ENCODE measurements at regions of chr18 and their contacts with region 1.

Region 1: GRCh38 chr18:45690975-45691815 is 32.8 kb upstream of the SLC14A1 start:
- DNase-seq: peak; percentile 77
- ATAC-seq: no peak
- H3K4me3 ChIP-seq: no peak overlapping the region
- H3K4me3 Mint-ChIP-seq: no peak overlapping the region
- H3K27ac ChIP-seq: no peak overlapping the region
- H3K27ac Mint-ChIP-seq: peak overlapping the region; percentile 43
- H3K4me1 ChIP-seq: peaks cover 32 to 44% of the 10 kb centered on the region in 2 donors
- H3K4me1 Mint-ChIP-seq: peaks cover 40% of the 10 kb centered on the region
- H3K27me3 ChIP-seq: no peaks in the 10 kb centered on the region
- H3K27me3 Mint-ChIP-seq: peaks cover 7% of the 10 kb centered on the region
- CTCF ChIP-seq: peak; percentile 86

Region 2: GRCh38 chr18:45664824-45665763 is 26.1 kb before region 1 on chr18:
- CTCF ChIA-PET with region 1: interaction called, 317 read pairs
- POLR2A ChIA-PET with region 1: interaction called, 31 read pairs
- intact Hi-C with region 1: loop called (anchors 1 kb)
- DNase-seq: peak; percentile 78
- ATAC-seq: peak; percentile 82
- H3K4me3 ChIP-seq: no peak overlapping the region
- H3K4me3 Mint-ChIP-seq: no peak overlapping the region
- H3K27ac ChIP-seq: no peak overlapping the region
- H3K27ac Mint-ChIP-seq: peak overlapping the region; percentile 67
- H3K4me1 ChIP-seq: peaks cover 13 to 26% of the 10 kb centered on the region in 2 donors
- H3K4me1 Mint-ChIP-seq: peaks cover 39% of the 10 kb centered on the region
- H3K27me3 ChIP-seq: no peaks in the 10 kb centered on the region
- H3K27me3 Mint-ChIP-seq: no peaks in the 10 kb centered on the region
- CTCF ChIP-seq: peak; percentile 97

Region 3: GRCh38 chr18:45722899-45723298 is 31.7 kb after region 1 on chr18:
- CTCF ChIA-PET with region 1: interaction called, 17 read pairs
- POLR2A ChIA-PET with region 1: no interaction called
- intact Hi-C with region 1: no loop called
- DNase-seq: peak; percentile 46
- ATAC-seq: peak; percentile 69
- H3K4me3 ChIP-seq: no peak overlapping the region
- H3K4me3 Mint-ChIP-seq: no peak overlapping the region
- H3K27ac ChIP-seq: no peak overlapping the region
- H3K27ac Mint-ChIP-seq: no peak overlapping the region
- H3K4me1 ChIP-seq: no peaks in the 10 kb centered on the region
- H3K4me1 Mint-ChIP-seq: no peaks in the 10 kb centered on the region
- H3K27me3 ChIP-seq: no peaks in the 10 kb centered on the region
- H3K27me3 Mint-ChIP-seq: peaks cover 6% of the 10 kb centered on the region
- CTCF ChIP-seq: peak; percentile 78

Region 4: DNA sequence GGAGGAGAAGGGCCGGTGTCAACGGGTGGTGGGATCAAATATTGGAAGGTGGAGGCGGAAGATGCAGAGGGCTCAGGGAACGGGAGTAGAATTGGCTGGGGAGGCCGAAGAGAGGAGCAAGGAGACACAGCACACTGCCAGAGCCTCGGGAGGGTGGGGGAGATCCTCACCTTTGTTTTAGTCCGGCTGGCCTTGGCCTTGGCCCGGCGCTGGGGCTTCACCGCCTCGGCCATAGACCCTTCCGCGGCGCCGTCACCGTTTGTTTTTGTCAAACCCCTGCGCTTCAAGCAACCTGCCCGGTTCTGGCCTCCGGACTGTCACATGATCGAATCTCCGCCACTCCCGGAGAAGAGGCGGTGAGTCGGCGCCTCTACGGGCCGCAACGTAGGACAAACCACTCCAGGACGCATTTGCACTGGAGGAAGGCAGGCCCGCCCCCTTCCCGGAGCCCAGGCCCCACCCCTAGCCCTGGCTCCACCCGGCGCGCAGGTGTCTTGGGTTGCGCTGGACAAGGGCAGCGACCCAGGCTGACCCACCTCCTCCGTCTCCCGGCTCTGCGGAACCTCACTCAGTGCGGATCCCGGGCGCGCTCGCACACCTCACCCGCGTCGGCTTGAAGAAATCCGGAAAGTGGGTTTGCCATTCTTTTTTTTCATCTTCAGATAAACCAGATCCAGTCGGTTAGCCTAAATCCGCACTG is 276.0 kb after region 1 on chr18 and contains the start of gene EPG5:
- CTCF ChIA-PET with region 1: interaction called, 3 read pairs
- POLR2A ChIA-PET with region 1: interaction called, 5 read pairs
- intact Hi-C with region 1: loop called (anchors 1 kb)
- DNase-seq: peak; percentile 94
- ATAC-seq: peak; percentile 99
- H3K4me3 ChIP-seq: peak within 1 kb of the TSS; percentile 76 to 90 (median 87)
- H3K4me3 Mint-ChIP-seq: peak within 1 kb of the TSS; percentile 99
- H3K27ac ChIP-seq: peak within 1 kb of the TSS; percentile 62 to 74
- H3K27ac Mint-ChIP-seq: peak within 1 kb of the TSS; percentile 94
- H3K4me1 ChIP-seq: peaks cover 0 to 9% of the 10 kb centered on the region in 2 donors
- H3K4me1 Mint-ChIP-seq: peaks cover 35% of the 10 kb centered on the region
- H3K27me3 ChIP-seq: no peaks in the 10 kb centered on the region
- H3K27me3 Mint-ChIP-seq: no peaks in the 10 kb centered on the region
- CTCF ChIP-seq: no peak
- total RNA-seq, gene EPG5: 46.8 and 50.4 TPM in 2 replicates

Region 5: GRCh38 chr18:46073474-46074331 is 382.5 kb after region 1 on chr18:
- CTCF ChIA-PET with region 1: interaction called, 11 read pairs
- POLR2A ChIA-PET with region 1: interaction called, 4 read pairs
- intact Hi-C with region 1: loop called (anchors 1 kb)
- DNase-seq: peak; percentile 69
- ATAC-seq: peak; percentile 54
- H3K4me3 ChIP-seq: no peak overlapping the region
- H3K4me3 Mint-ChIP-seq: no peak overlapping the region
- H3K27ac ChIP-seq: no peak overlapping the region
- H3K27ac Mint-ChIP-seq: no peak overlapping the region
- H3K4me1 ChIP-seq: peaks cover 17 to 26% of the 10 kb centered on the region in 2 donors
- H3K4me1 Mint-ChIP-seq: peaks cover 19% of the 10 kb centered on the region
- H3K27me3 ChIP-seq: peaks cover 0 to 34% (median 13%) of the 10 kb centered on the region in 4 experiments
- H3K27me3 Mint-ChIP-seq: peaks cover 6% of the 10 kb centered on the region
- CTCF ChIP-seq: peak; percentile 78